Caco-2 (cell line): ENCODE measurements at regions of chr17 and their contacts with region 1.

Region 1: DNA sequence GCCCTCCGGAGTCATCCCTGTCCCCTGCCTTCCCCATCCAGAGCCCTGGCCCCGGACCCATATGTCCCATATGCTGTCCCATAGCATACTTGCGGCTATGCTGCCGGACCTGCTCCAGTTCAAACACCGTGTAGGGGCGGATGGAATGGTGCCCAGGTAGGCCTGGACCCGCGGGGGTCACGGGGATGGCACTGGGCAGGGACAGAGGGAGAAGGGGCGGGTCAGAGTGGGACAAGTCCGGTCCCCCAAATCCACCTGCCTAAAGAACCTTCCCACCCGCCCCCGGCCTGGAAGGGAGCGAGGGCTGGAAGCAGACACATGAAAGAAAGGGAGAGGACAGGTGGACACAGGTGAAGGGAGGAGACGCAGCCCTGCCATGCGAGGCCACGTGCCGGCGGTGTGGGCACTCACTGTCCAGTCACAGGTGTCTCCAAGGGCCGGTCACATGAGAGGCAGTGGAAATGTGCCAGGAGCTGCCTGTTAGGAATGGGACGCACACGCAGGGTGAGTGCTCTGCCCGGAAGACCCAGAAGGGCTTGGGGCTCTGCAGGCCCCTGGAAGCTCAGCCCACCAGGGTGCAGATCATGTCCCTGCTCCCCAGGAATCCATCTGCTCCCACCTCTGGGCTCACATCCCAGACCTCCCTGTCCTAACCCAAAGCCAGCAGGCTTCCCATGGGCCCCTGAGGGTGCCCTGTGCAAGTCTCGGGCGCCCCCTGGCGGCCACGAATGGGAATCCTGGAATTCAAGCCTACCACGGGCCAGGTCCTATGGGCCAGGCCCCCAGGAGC is 14.0 kb downstream of the UBALD2 start:
- DNase-seq: peak; percentile 87 to 94
- H3K4me3 ChIP-seq: no peak overlapping the region
- H3K4me3 Mint-ChIP-seq: no peak overlapping the region
- H3K27ac Mint-ChIP-seq: no peak overlapping the region
- H3K4me1 ChIP-seq: peaks cover 16% of the 10 kb centered on the region
- H3K4me1 Mint-ChIP-seq: peaks cover 5% of the 10 kb centered on the region
- H3K27me3 ChIP-seq: no peaks in the 10 kb centered on the region
- H3K27me3 Mint-ChIP-seq: no peaks in the 10 kb centered on the region
- CTCF ChIP-seq: peak; percentile 98

Region 2: GRCh38 chr17:76182016-76182764 is 97.0 kb before region 1 on chr17:
- CTCF ChIA-PET with region 1: interaction called, 13 read pairs
- POLR2A ChIA-PET with region 1: no interaction called
- intact Hi-C with region 1: loop called (anchors 5 kb)
- DNase-seq: peak; percentile 89 to 93
- H3K4me3 ChIP-seq: no peak overlapping the region
- H3K4me3 Mint-ChIP-seq: no peak overlapping the region
- H3K27ac Mint-ChIP-seq: no peak overlapping the region
- H3K4me1 ChIP-seq: peaks cover 7% of the 10 kb centered on the region
- H3K4me1 Mint-ChIP-seq: peaks cover 6% of the 10 kb centered on the region
- H3K27me3 ChIP-seq: no peaks in the 10 kb centered on the region
- H3K27me3 Mint-ChIP-seq: no peaks in the 10 kb centered on the region
- CTCF ChIP-seq: peak; percentile 88 to 90

Region 3: DNA sequence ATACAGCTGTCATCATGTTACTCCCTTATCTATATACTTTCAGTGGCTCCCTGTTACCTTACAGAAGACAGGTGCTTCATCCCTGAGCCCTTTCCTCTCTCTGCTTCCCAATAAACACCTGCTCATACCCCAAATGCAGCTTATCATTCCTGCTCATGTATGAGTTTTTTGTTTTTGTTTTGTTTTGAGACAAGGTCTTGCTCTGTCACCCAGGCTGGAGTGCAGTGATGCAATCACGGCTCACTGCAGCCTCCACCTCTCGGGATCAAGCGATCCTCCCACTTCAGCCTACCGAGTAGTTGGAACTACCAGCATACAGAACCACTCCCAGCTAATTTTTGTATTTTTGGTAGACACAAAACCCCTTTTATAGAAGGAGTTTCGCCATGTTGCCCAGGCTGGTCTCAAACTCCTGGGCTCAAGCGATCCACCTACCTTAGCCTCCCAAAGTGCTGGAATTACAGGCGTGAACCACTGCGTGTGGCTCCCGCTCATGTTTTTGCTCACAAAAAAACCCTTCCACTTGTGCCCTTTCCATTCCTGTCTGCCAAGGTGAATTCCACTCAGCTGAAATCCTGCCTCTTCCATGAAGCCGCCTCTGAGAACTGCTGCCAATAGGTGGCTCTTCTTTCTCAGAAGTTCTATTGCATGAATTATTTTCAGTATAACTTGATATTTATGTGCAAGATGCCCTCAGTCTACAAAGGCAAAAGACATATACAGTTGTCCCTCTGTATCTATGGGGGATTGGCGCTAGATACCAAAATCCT is 30.9 kb before region 1 on chr17:
- CTCF ChIA-PET with region 1: interaction called, 6 read pairs
- POLR2A ChIA-PET with region 1: no interaction called
- intact Hi-C with region 1: loop called (anchors 2 kb)
- DNase-seq: no peak
- H3K4me3 ChIP-seq: no peak overlapping the region
- H3K4me3 Mint-ChIP-seq: no peak overlapping the region
- H3K27ac Mint-ChIP-seq: no peak overlapping the region
- H3K4me1 ChIP-seq: peaks cover 44% of the 10 kb centered on the region
- H3K4me1 Mint-ChIP-seq: peaks cover 37% of the 10 kb centered on the region
- H3K27me3 ChIP-seq: no peaks in the 10 kb centered on the region
- H3K27me3 Mint-ChIP-seq: no peaks in the 10 kb centered on the region
- CTCF ChIP-seq: peak in 1 of 2 experiments; percentile 21

Region 4: DNA sequence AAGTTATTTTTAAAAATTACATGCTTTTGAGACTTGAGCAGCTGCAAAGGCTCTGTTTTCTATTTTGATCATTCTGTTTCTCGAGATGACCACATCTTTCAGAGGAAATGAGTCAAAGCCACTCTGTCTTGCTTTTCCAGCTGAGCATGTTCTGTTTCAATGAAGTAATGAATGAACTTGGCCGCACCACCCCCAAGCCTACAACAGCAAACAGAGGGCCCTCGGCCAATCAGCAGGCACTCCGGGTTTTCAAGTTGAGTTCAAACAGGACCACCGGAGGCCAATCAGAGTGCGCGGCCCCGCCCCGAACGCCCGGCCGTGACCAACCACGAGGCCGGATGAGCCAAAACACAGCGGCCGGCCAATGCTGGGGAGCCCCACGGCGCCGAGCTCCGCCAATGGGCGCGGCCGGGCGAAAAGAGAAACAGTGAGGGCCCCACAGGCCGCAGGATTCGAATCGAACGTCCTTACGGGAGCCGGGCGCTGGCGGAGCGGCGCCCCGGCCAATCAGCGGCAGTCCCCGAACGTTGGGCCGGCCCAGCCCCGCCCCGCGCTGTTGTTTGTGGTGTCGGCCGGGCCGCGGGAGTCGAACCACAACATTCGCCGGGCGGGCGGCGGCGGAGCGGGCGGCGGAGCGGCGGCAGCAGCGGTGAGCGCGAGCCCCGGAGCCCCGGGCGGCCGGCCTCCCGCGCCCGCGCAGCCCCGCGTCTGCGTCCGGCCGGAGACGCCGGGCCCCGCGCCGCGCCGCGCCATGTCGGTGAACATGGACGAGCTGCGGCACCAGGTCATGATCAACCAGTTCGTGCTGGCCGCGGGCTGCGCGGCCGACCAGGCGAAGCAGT is 14.2 kb before region 1 on chr17 and contains the start of gene UBALD2:
- CTCF ChIA-PET with region 1: interaction called, 22 read pairs
- POLR2A ChIA-PET with region 1: interaction called, 5 read pairs
- intact Hi-C with region 1: no loop called
- DNase-seq: peak; percentile 99 to 100
- H3K4me3 ChIP-seq: peak within 1 kb of the TSS; percentile 85
- H3K4me3 Mint-ChIP-seq: peak within 1 kb of the TSS; percentile 80
- H3K27ac Mint-ChIP-seq: peak within 1 kb of the TSS; percentile 89
- H3K4me1 ChIP-seq: peaks cover 65% of the 10 kb centered on the region
- H3K4me1 Mint-ChIP-seq: peaks cover 33% of the 10 kb centered on the region
- H3K27me3 ChIP-seq: no peaks in the 10 kb centered on the region
- H3K27me3 Mint-ChIP-seq: no peaks in the 10 kb centered on the region
- CTCF ChIP-seq: no peak
- total RNA-seq, gene UBALD2: 50.0 and 51.6 TPM in 2 replicates